Caco-2 (cell line): ENCODE measurements at regions of chr14 and their contacts with region 1.

Region 1: GRCh38 chr14:30214461-30215090 is 286.9 kb upstream of the PRKD1 start:
- DNase-seq: peak in 1 of 2 experiments; percentile 32
- H3K4me3 ChIP-seq: no peak overlapping the region
- H3K4me3 Mint-ChIP-seq: no peak overlapping the region
- H3K27ac Mint-ChIP-seq: no peak overlapping the region
- H3K4me1 ChIP-seq: no peaks in the 10 kb centered on the region
- H3K4me1 Mint-ChIP-seq: no peaks in the 10 kb centered on the region
- H3K27me3 ChIP-seq: no peaks in the 10 kb centered on the region
- H3K27me3 Mint-ChIP-seq: peaks cover under 1% of the 10 kb centered on the region
- CTCF ChIP-seq: peak; percentile 32 to 63

Region 2: GRCh38 chr14:29548948-29549370 is 665.6 kb before region 1 on chr14:
- CTCF ChIA-PET with region 1: no interaction called
- POLR2A ChIA-PET with region 1: no interaction called
- intact Hi-C with region 1: loop called (anchors 1 kb)
- DNase-seq: peak in 1 of 2 experiments; percentile 20
- H3K4me3 ChIP-seq: no peak overlapping the region
- H3K4me3 Mint-ChIP-seq: no peak overlapping the region
- H3K27ac Mint-ChIP-seq: no peak overlapping the region
- H3K4me1 ChIP-seq: no peaks in the 10 kb centered on the region
- H3K4me1 Mint-ChIP-seq: no peaks in the 10 kb centered on the region
- H3K27me3 ChIP-seq: no peaks in the 10 kb centered on the region
- H3K27me3 Mint-ChIP-seq: no peaks in the 10 kb centered on the region
- CTCF ChIP-seq: peak; percentile 35 to 50

Region 3: GRCh38 chr14:30005114-30005808 is 209.3 kb before region 1 on chr14:
- CTCF ChIA-PET with region 1: no interaction called
- POLR2A ChIA-PET with region 1: no interaction called
- intact Hi-C with region 1: loop called (anchors 10 kb)
- DNase-seq: peak in 1 of 2 experiments; percentile 20
- H3K4me3 ChIP-seq: no peak overlapping the region
- H3K4me3 Mint-ChIP-seq: no peak overlapping the region
- H3K27ac Mint-ChIP-seq: no peak overlapping the region
- H3K4me1 ChIP-seq: no peaks in the 10 kb centered on the region
- H3K4me1 Mint-ChIP-seq: no peaks in the 10 kb centered on the region
- H3K27me3 ChIP-seq: no peaks in the 10 kb centered on the region
- H3K27me3 Mint-ChIP-seq: peaks cover 9% of the 10 kb centered on the region
- CTCF ChIP-seq: peak; percentile 56 to 58

Region 4: GRCh38 chr14:30153717-30154116 is 60.9 kb before region 1 on chr14:
- CTCF ChIA-PET with region 1: no interaction called
- POLR2A ChIA-PET with region 1: no interaction called
- intact Hi-C with region 1: no loop called
- DNase-seq: no peak
- H3K4me3 ChIP-seq: no peak overlapping the region
- H3K4me3 Mint-ChIP-seq: no peak overlapping the region
- H3K27ac Mint-ChIP-seq: no peak overlapping the region
- H3K4me1 ChIP-seq: no peaks in the 10 kb centered on the region
- H3K4me1 Mint-ChIP-seq: no peaks in the 10 kb centered on the region
- H3K27me3 ChIP-seq: no peaks in the 10 kb centered on the region
- H3K27me3 Mint-ChIP-seq: peaks cover 3% of the 10 kb centered on the region
- CTCF ChIP-seq: no peak